CD8-positive, alpha-beta T cell (primary cell): ENCODE measurements at regions of chr10 and their contacts with region 1.

Region 1: GRCh38 chr10:14543046-14543903 is 212.6 kb upstream of the FRMD4A start:
- DNase-seq: peak in 6 of 9 experiments; percentile 47 to 82 (median 66)
- ATAC-seq: peak; percentile 84
- H3K4me3 ChIP-seq: peak overlapping the region; percentile 4 to 35
- H3K4me3 Mint-ChIP-seq: peak overlapping the region; percentile 75
- H3K27ac ChIP-seq: peak overlapping the region; percentile 68
- H3K27ac Mint-ChIP-seq: peak overlapping the region; percentile 95
- H3K4me1 ChIP-seq: peaks cover 62% of the 10 kb centered on the region
- H3K4me1 Mint-ChIP-seq: peaks cover 89% of the 10 kb centered on the region
- H3K27me3 ChIP-seq: no peaks in the 10 kb centered on the region
- H3K27me3 Mint-ChIP-seq: no peaks in the 10 kb centered on the region
- CTCF ChIP-seq: peak; percentile 76

Region 2: GRCh38 chr10:14195433-14195832 is 347.8 kb before region 1 on chr10:
- CTCF ChIA-PET with region 1: interaction called, 5 read pairs
- POLR2A ChIA-PET with region 1: no interaction called
- intact Hi-C with region 1: loop called (anchors 1 to 5 kb)
- DNase-seq: no peak
- ATAC-seq: no peak
- H3K4me3 ChIP-seq: no peak overlapping the region
- H3K4me3 Mint-ChIP-seq: no peak overlapping the region
- H3K27ac ChIP-seq: no peak overlapping the region
- H3K27ac Mint-ChIP-seq: no peak overlapping the region
- H3K4me1 ChIP-seq: no peaks in the 10 kb centered on the region
- H3K4me1 Mint-ChIP-seq: no peaks in the 10 kb centered on the region
- H3K27me3 ChIP-seq: peaks cover 2 to 3% of the 10 kb centered on the region in 2 experiments
- H3K27me3 Mint-ChIP-seq: peaks cover 36% of the 10 kb centered on the region
- CTCF ChIP-seq: no peak

Region 3: GRCh38 chr10:14507176-14507575 is 36.1 kb before region 1 on chr10:
- CTCF ChIA-PET with region 1: interaction called, 12 read pairs
- POLR2A ChIA-PET with region 1: no interaction called
- intact Hi-C with region 1: no loop called
- DNase-seq: peak in 7 of 9 experiments; percentile 14 to 89 (median 57)
- ATAC-seq: peak; percentile 88
- H3K4me3 ChIP-seq: no peak overlapping the region
- H3K4me3 Mint-ChIP-seq: peak overlapping the region; percentile 54
- H3K27ac ChIP-seq: peak overlapping the region; percentile 38 to 46
- H3K27ac Mint-ChIP-seq: peak overlapping the region; percentile 88
- H3K4me1 ChIP-seq: peaks cover 24% of the 10 kb centered on the region
- H3K4me1 Mint-ChIP-seq: peaks cover 37% of the 10 kb centered on the region
- H3K27me3 ChIP-seq: no peaks in the 10 kb centered on the region
- H3K27me3 Mint-ChIP-seq: no peaks in the 10 kb centered on the region
- CTCF ChIP-seq: no peak

Region 4: DNA sequence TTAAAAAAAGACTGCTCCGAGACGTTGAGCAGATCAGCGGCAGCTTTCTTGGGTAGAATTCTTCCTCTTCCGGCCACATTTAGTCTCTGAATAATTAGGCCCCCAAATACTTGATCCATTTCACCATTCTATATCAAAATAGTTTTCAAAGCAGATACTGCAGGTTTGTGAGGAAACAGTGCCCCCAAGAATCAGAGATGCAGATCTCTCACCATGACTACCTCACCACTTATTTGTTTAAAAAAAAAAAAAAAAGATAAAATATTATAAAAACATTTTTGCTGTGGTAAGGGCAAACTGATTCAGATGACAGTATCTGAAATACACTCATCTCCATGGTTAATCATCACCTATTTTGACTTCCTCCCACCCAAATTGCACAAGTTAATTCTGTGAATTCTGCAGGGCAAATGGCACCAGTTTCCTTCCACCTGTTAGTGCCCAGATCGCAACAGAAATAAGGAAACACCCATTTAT is 21.0 kb after region 1 on chr10:
- CTCF ChIA-PET with region 1: interaction called, 29 read pairs
- POLR2A ChIA-PET with region 1: interaction called, 5 read pairs
- intact Hi-C with region 1: loop called in 1 of 2 experiments (anchors 2 kb)
- DNase-seq: peak in 3 of 9 experiments; percentile 45 to 85 (median 75)
- ATAC-seq: peak; percentile 57
- H3K4me3 ChIP-seq: peak overlapping the region in 1 of 2 experiments; percentile 21
- H3K4me3 Mint-ChIP-seq: peak overlapping the region; percentile 80
- H3K27ac ChIP-seq: peak overlapping the region; percentile 77 to 79
- H3K27ac Mint-ChIP-seq: peak overlapping the region; percentile 98
- H3K4me1 ChIP-seq: peaks cover 90% of the 10 kb centered on the region
- H3K4me1 Mint-ChIP-seq: peaks cover 88% of the 10 kb centered on the region
- H3K27me3 ChIP-seq: no peaks in the 10 kb centered on the region
- H3K27me3 Mint-ChIP-seq: no peaks in the 10 kb centered on the region
- CTCF ChIP-seq: no peak

Region 5: GRCh38 chr10:14822879-14823755 is 279.8 kb after region 1 on chr10:
- CTCF ChIA-PET with region 1: interaction called, 24 read pairs
- POLR2A ChIA-PET with region 1: no interaction called
- intact Hi-C with region 1: loop called in 1 of 2 experiments (anchors 5 kb)
- DNase-seq: peak in 8 of 9 experiments; percentile 6 to 63 (median 36)
- ATAC-seq: no peak
- H3K4me3 ChIP-seq: no peak overlapping the region
- H3K4me3 Mint-ChIP-seq: no peak overlapping the region
- H3K27ac ChIP-seq: no peak overlapping the region
- H3K27ac Mint-ChIP-seq: no peak overlapping the region
- H3K4me1 ChIP-seq: no peaks in the 10 kb centered on the region
- H3K4me1 Mint-ChIP-seq: peaks cover 2% of the 10 kb centered on the region
- H3K27me3 ChIP-seq: no peaks in the 10 kb centered on the region
- H3K27me3 Mint-ChIP-seq: no peaks in the 10 kb centered on the region
- CTCF ChIP-seq: peak; percentile 75